MCF 10A (cell line): ENCODE measurements at regions of chr1 and their contacts with region 1.

Region 1: DNA sequence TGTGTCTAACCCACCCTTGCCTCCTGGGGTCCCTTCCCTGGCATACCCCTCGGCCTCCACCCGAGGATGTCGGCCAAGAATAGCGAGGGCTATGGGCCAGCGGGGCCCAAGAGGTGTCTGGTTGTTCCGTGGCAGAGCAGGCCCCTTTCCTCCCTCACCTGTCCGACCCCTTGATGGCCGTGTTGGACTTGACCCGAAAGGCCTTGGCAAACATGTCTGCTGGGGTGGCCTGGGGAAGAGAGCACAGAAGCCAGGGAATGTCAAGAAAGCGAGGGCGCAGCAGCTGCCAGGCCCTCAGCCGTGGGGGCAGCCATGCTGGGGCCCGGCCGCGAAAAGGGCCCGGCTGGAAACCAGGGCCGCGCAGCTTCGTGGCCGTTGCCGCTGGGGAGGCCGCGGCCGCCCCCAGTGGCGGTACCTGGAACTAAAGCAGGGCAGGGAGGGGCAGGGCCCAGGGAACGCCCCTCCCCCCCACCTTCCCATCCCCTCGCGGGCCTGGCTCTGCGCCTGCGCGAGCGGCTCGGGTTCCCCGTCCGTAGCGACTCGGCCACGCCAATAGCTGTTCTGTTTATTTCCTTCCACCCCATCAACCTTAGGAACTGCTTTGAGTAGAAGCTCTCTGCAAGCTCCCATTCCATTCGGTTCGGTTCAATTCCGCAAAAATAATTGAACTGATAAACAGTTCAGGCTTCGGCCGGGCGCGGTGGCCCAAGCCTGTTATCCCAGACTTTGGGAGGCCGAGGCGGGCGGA is at the start of gene EIF2D:
- DNase-seq: peak; percentile 99
- H3K4me3 Mint-ChIP-seq: peak within 1 kb of the TSS; percentile 88
- H3K27ac Mint-ChIP-seq: peak within 1 kb of the TSS; percentile 97
- H3K4me1 Mint-ChIP-seq: peaks cover 21% of the 10 kb centered on the region
- H3K27me3 Mint-ChIP-seq: no peaks in the 10 kb centered on the region
- CTCF ChIP-seq: peak; percentile 100
- total RNA-seq, gene EIF2D: 110 and 116 TPM in 2 replicates

Region 2: DNA sequence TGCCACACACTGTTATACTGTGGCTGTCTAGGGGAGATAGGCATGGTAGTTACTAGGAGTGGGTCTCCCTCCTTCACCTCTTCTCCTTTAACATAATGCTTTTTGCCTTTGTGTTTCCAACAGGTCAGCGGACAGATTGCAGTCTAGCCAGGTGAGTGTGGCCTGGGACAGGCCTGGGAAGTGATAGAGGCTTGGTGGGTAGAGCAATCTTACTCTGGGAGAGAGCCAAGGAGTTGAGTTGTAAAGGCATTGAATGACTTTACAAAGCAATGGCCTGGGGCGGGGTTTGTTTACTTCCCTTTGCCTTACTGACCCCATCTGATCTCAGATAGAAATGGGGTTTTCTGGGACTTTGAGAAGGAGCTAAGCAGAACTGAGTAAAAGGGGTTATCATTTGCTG is 193.1 kb before region 1 on chr1:
- CTCF ChIA-PET with region 1: no interaction called
- POLR2A ChIA-PET with region 1: no interaction called
- intact Hi-C with region 1: no loop called
- DNase-seq: peak; percentile 78
- H3K4me3 Mint-ChIP-seq: no peak overlapping the region
- H3K27ac Mint-ChIP-seq: peak overlapping the region; percentile 84
- H3K4me1 Mint-ChIP-seq: peaks cover 14% of the 10 kb centered on the region
- H3K27me3 Mint-ChIP-seq: no peaks in the 10 kb centered on the region
- CTCF ChIP-seq: no peak

Region 3: DNA sequence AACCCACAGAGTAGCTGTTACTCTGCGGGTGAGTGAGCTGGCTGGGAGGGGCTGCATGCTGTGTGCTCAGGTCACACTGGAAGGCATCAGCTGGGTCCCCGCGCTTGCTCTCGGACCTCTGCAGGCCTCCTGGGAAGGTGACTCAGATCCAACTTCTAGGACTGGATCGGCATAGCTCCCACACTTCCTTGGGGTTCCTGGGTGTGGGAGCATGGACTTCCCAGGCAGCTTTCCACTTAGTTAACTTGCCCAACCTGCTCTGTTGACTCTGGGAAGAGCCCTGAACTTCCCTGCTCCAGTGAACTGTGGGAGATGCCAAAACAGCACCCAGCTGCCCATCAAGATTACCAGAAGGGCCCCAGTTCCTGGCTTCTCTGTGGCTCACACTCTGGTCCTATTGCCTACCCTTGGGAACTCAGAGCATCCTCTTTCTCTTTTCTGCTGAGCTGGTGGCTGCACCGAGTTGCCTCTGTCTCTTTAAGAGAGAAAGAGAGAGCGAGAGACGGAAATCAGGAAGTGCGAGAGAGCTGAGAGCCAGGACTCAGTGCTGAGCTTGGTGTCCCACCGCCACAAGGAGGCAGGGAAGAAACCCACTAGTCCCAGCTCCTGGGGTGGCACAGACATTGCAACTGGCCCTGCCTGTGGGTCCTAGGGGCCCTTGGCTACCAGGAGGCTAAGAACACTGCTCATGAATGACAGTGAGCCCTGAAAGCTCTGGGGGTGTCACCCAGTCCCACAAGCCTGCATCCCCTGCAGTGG is 142.2 kb before region 1 on chr1 and contains the start of gene IKBKE:
- CTCF ChIA-PET with region 1: interaction called, 8 read pairs
- POLR2A ChIA-PET with region 1: interaction called, 18 read pairs
- intact Hi-C with region 1: no loop called
- DNase-seq: peak; percentile 85
- H3K4me3 Mint-ChIP-seq: peak within 1 kb of the TSS; percentile 75
- H3K27ac Mint-ChIP-seq: peak within 1 kb of the TSS; percentile 61
- H3K4me1 Mint-ChIP-seq: peaks cover 43% of the 10 kb centered on the region
- H3K27me3 Mint-ChIP-seq: peaks cover 13% of the 10 kb centered on the region
- CTCF ChIP-seq: no peak
- total RNA-seq, gene IKBKE: 7.1 and 12.1 TPM in 2 replicates

Region 4: DNA sequence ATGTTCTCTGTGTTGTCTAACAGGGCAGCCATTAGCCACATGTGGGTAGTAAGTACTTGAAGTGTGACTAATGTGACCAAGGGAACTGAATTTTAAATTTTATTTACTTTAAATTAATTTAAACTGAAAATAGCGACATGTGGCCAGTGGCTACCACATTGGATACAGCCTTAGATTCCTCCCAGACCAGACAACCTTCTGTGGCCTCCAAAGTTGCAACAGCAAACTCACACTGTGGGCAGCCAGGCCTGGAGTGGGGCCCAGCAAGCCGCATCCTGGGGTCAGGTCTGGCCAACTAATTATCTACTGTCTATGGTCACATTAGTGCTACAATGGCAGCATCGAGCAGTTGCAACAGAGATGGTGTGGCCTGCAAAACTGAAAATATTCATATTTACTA is 11.8 kb before region 1 on chr1:
- CTCF ChIA-PET with region 1: interaction called, 23 read pairs
- POLR2A ChIA-PET with region 1: interaction called, 5 read pairs
- intact Hi-C with region 1: no loop called
- DNase-seq: no peak
- H3K4me3 Mint-ChIP-seq: no peak overlapping the region
- H3K27ac Mint-ChIP-seq: no peak overlapping the region
- H3K4me1 Mint-ChIP-seq: no peaks in the 10 kb centered on the region
- H3K27me3 Mint-ChIP-seq: no peaks in the 10 kb centered on the region
- CTCF ChIP-seq: no peak

Region 5: DNA sequence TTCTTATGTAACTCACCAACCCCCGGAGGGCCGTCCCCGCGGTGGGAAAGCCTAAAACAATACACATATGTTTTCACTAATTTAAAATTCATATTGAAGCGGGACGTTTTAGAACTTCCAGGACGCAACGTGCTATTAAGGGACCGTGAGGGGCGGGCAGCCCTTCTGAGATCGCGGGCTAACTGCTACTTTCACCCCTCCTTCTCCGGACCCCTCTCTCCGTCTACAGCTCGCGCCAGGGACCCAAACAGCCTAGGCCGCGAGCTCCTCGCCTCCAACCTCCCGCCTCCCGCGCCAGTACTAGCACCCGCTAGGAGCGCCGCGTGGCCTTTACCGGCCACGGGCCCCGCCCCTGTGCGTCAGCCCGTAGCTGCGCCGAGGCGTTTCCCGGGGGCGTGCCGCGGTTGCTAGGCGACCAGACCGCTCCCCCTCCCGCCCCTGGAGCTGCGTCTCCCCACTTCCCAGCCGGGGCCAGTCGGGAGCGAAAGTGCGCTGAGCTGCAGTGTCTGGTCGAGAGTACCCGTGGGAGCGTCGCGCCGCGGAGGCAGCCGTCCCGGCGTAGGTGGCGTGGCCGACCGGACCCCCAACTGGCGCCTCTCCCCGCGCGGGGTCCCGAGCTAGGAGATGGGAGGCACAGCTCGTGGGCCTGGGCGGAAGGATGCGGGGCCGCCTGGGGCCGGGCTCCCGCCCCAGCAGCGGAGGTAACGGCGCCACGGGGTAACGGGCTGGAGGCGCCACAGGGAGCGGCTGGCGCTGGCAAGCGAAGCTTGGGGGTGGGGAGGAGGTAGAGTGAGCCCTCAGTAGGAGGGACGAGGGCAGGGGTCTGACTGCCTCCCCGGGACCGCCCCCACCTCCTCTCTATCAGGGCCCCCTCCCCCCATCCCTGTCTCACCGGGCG is 23.0 kb after region 1 on chr1 and contains the start of gene DYRK3:
- CTCF ChIA-PET with region 1: interaction called, 269 read pairs
- POLR2A ChIA-PET with region 1: interaction called, 215 read pairs
- intact Hi-C with region 1: loop called (anchors 1 kb)
- DNase-seq: peak; percentile 99
- H3K4me3 Mint-ChIP-seq: peak within 1 kb of the TSS; percentile 89
- H3K27ac Mint-ChIP-seq: peak within 1 kb of the TSS; percentile 82
- H3K4me1 Mint-ChIP-seq: peaks cover 38% of the 10 kb centered on the region
- H3K27me3 Mint-ChIP-seq: no peaks in the 10 kb centered on the region
- CTCF ChIP-seq: no peak
- total RNA-seq, gene DYRK3: 45.4 and 58.5 TPM in 2 replicates

Region 6: GRCh38 chr1:206658264-206658980 is 46.1 kb after region 1 on chr1:
- CTCF ChIA-PET with region 1: interaction called, 356 read pairs
- POLR2A ChIA-PET with region 1: interaction called, 16 read pairs
- intact Hi-C with region 1: no loop called
- DNase-seq: no peak
- H3K4me3 Mint-ChIP-seq: no peak overlapping the region
- H3K27ac Mint-ChIP-seq: no peak overlapping the region
- H3K4me1 Mint-ChIP-seq: peaks cover 6% of the 10 kb centered on the region
- H3K27me3 Mint-ChIP-seq: peaks cover 13% of the 10 kb centered on the region
- CTCF ChIP-seq: peak; percentile 89

Region 7: DNA sequence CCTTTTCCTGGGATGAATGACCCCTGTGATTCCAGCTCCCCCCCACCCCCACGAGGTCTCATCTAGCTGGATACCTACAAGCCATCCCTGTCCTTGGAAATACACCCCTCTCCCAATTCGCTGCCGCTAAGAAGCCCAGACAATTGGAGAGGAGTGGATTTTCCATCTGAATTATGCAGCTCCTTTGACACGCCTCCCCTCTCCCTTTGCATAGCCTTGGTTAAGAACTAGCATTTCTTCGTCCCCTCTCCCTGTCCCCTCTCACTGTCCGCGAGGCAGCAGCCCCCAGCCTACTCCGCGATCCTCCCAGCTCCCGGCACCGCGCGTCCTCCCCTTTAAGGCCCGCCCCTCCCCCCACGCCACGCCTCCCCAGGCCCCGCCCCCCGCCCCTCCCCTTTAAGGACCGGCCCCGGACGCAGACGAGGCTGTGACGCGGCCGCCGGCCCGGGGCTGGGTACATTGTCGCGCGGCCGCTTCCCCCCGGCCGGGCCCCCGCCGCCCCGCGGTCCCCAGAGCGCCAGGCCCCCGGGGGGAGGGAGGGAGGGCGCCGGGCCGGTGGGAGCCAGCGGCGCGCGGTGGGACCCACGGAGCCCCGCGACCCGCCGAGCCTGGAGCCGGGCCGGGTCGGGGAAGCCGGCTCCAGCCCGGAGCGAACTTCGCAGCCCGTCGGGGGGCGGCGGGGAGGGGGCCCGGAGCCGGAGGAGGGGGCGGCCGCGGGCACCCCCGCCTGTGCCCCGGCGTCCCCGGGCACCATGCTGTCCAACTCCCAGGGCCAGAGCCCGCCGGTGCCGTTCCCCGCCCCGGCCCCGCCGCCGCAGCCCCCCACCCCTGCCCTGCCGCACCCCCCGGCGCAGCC is 72.4 kb after region 1 on chr1 and contains the start of gene MAPKAPK2:
- CTCF ChIA-PET with region 1: interaction called, 8 read pairs
- POLR2A ChIA-PET with region 1: interaction called, 25 read pairs
- intact Hi-C with region 1: no loop called
- DNase-seq: peak; percentile 83
- H3K4me3 Mint-ChIP-seq: peak within 1 kb of the TSS; percentile 93
- H3K27ac Mint-ChIP-seq: peak within 1 kb of the TSS; percentile 97
- H3K4me1 Mint-ChIP-seq: peaks cover 46% of the 10 kb centered on the region
- H3K27me3 Mint-ChIP-seq: no peaks in the 10 kb centered on the region
- CTCF ChIP-seq: no peak
- total RNA-seq, gene MAPKAPK2: 142 and 178 TPM in 2 replicates

Region 8: GRCh38 chr1:206792939-206793607 is 180.8 kb after region 1 on chr1:
- CTCF ChIA-PET with region 1: no interaction called
- POLR2A ChIA-PET with region 1: no interaction called
- intact Hi-C with region 1: no loop called
- DNase-seq: no peak
- H3K4me3 Mint-ChIP-seq: no peak overlapping the region
- H3K27ac Mint-ChIP-seq: no peak overlapping the region
- H3K4me1 Mint-ChIP-seq: peaks cover 11% of the 10 kb centered on the region
- H3K27me3 Mint-ChIP-seq: peaks cover 8% of the 10 kb centered on the region
- CTCF ChIP-seq: no peak

Region 9: GRCh38 chr1:207702317-207702716 is 1090.0 kb after region 1 on chr1:
- CTCF ChIA-PET with region 1: no interaction called
- POLR2A ChIA-PET with region 1: no interaction called
- intact Hi-C with region 1: no loop called
- DNase-seq: no peak
- H3K4me3 Mint-ChIP-seq: no peak overlapping the region
- H3K27ac Mint-ChIP-seq: no peak overlapping the region
- H3K4me1 Mint-ChIP-seq: peaks cover 23% of the 10 kb centered on the region
- H3K27me3 Mint-ChIP-seq: no peaks in the 10 kb centered on the region
- CTCF ChIP-seq: no peak